A673 (cell line): ENCODE measurements at regions of chr5 and their contacts with region 1.

Region 1: DNA sequence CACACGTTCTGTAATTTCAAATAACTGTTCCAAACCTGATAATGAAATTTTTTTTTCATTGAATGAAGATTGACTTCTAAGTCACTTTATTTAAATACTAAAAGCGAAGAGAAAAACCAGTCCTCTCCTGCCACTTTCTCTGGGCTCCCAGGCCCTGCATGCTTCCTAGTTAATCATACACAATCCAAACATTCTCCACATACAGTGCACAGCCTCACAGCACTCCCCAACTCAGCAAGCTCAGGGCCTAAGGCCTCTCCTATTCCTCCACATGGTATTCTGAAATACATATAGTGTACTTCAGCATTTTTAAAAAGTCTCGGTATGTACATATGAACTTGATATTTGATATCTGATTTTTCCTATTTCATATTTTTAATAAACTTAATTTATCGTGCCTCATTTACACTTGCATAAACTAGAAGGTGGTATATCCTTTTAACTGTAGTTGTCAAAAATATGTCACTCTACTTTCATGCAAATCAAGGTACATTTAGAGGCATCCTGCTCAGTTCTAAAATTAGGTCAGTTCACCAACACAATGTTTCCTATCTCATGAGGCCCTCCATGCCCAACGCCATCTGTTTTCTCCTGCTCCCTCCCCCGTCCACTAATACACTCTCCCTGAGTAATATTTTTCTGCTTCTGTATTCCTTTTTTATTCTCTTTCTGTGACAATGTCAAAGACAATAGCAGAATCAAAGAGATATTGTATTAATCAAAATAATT is 206.7 kb downstream of the ARRDC3 start:
- DNase-seq: no peak
- H3K4me3 ChIP-seq: no peak overlapping the region
- H3K27ac ChIP-seq: peak overlapping the region; percentile 44
- H3K4me1 ChIP-seq: peaks cover 45% of the 10 kb centered on the region
- H3K27me3 ChIP-seq: no peaks in the 10 kb centered on the region
- CTCF ChIP-seq: no peak

Region 2: GRCh38 chr5:90854169-90854568 is 322.3 kb before region 1 on chr5:
- CTCF ChIA-PET with region 1: no interaction called
- POLR2A ChIA-PET with region 1: no interaction called
- intact Hi-C with region 1: no loop called
- DNase-seq: no peak
- H3K4me3 ChIP-seq: no peak overlapping the region
- H3K27ac ChIP-seq: no peak overlapping the region
- H3K4me1 ChIP-seq: no peaks in the 10 kb centered on the region
- H3K27me3 ChIP-seq: no peaks in the 10 kb centered on the region
- CTCF ChIP-seq: no peak

Region 3: DNA sequence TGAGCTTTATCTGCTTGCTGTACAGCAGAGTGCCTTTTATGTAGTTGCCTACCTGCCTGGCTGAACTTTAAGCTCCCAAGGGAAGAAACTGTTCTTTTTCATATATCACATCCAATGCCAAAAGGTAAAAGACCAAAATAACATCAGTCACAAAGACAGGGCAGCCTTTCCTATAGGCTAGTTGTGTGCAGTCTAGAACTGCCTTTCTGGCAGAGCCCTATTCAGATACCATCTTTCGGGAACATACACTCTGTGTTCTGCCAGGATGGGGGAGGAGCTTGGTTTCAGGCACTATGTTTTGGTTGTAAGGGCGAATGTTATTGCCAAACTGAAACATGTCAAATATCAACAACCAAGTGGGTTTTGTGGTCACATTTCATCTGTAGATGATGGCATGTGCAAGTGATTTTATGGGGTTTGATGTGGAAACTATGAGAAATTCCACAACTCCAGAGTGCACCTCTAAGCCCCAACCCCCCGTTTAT is 303.4 kb before region 1 on chr5:
- CTCF ChIA-PET with region 1: no interaction called
- POLR2A ChIA-PET with region 1: no interaction called
- intact Hi-C with region 1: loop called (anchors 5 kb)
- DNase-seq: no peak
- H3K4me3 ChIP-seq: no peak overlapping the region
- H3K27ac ChIP-seq: no peak overlapping the region
- H3K4me1 ChIP-seq: peaks cover 11% of the 10 kb centered on the region
- H3K27me3 ChIP-seq: no peaks in the 10 kb centered on the region
- CTCF ChIP-seq: no peak

Region 4: GRCh38 chr5:90932052-90932699 is 244.3 kb before region 1 on chr5:
- CTCF ChIA-PET with region 1: no interaction called
- POLR2A ChIA-PET with region 1: no interaction called
- intact Hi-C with region 1: loop called (anchors 1 kb)
- DNase-seq: peak; percentile 82
- H3K4me3 ChIP-seq: no peak overlapping the region
- H3K27ac ChIP-seq: peak overlapping the region; percentile 2
- H3K4me1 ChIP-seq: peaks cover 11% of the 10 kb centered on the region
- H3K27me3 ChIP-seq: no peaks in the 10 kb centered on the region
- CTCF ChIP-seq: peak; percentile 85

Region 5: GRCh38 chr5:91456928-91457680 is 280.7 kb after region 1 on chr5:
- CTCF ChIA-PET with region 1: no interaction called
- POLR2A ChIA-PET with region 1: no interaction called
- intact Hi-C with region 1: no loop called
- DNase-seq: no peak
- H3K4me3 ChIP-seq: no peak overlapping the region
- H3K27ac ChIP-seq: no peak overlapping the region
- H3K4me1 ChIP-seq: no peaks in the 10 kb centered on the region
- H3K27me3 ChIP-seq: no peaks in the 10 kb centered on the region
- CTCF ChIP-seq: no peak